Right ventricle myocardium superior (tissue), 1 donor: ENCODE measurements at regions of chr11 and their contacts with region 1.

Region 1: DNA sequence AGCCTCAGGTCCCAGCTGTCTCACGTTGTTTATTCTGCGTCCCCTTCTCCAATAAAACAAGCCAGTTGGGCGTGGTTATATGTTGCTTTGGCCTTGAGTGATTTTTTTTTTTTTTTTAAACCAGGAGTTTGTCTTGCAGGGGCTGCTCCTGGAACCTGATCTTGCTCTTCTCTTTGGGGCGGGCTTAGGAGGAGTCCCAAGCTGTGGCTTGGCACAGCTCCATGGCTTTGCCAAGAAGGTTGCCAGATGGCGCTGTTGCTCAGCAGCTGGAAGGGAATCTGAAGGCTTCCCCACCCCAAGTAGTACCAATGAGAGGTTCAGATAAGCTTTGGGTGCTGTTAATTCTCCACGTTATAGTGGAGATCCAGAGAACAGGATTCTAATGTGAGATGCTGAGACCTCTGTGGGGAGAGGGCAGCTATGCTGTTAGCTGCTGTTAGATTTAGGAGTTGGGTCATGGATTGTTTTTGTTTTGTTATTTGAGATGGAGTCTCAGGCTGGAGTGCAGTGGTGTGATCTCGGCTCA is 2.0 kb upstream of the FERMT3 start:
- DNase-seq: peak; percentile 91
- ATAC-seq: peak; percentile 66

Region 2: DNA sequence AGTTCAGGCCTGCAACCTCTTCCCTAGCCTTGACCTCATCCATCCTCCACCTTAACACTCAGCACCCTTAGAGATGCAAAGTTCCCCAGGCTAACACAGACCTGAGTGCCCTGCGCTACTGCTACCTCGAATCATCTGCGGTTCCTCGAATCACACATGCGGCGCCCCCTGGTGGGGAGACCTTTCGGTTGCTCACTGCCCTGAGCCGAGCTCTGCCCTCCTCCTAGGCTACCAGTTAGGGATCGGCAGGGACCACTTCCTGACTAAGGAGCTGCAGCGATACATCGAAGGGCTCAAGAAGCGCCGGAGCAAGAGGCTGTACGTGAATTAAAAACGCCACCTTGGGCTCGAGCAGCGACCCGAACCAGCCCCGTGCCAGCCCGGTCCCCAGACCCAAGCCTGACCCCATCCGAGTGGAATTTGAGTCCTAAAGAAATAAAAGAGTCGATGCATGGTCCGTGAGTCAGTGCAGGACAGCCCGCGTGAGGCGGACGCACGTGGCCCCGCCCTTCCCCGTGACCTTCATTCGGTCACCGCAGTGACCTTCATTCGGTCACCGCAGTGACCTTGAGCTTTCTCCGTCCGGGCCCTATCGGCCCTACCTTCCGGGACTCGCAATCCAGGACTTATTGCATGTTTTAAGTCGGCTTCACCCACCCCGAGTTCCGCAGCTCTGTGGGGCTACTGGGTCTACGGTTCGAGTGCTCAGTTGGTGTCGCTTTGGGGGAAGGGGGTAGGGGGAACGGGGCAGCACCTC is 100.0 kb after region 1 on chr11:
- intact Hi-C with region 1: loop called (anchors 5 kb)
- DNase-seq: peak; percentile 98
- ATAC-seq: peak; percentile 58